BJ (cell line): ENCODE measurements at regions of chr1 and their contacts with region 1.

Region 1: GRCh38 chr1:226626577-226626956 is 78.0 kb downstream of the STUM start:
- DNase-seq: no peak
- H3K4me3 ChIP-seq: no peak overlapping the region
- H3K27me3 ChIP-seq: peaks cover 1% of the 10 kb centered on the region; the same call in 1 of the 2 replicates
- CTCF ChIP-seq: peak; percentile 97

Region 2: GRCh38 chr1:226603022-226603857 is 23.3 kb before region 1 on chr1:
- CTCF ChIA-PET with region 1: interaction called, 24 read pairs
- POLR2A ChIA-PET with region 1: no interaction called
- DNase-seq: peak; percentile 40
- H3K4me3 ChIP-seq: no peak overlapping the region
- H3K27me3 ChIP-seq: peaks cover 1% of the 10 kb centered on the region; the same call in 1 of the 2 replicates
- CTCF ChIP-seq: no peak

Region 3: DNA sequence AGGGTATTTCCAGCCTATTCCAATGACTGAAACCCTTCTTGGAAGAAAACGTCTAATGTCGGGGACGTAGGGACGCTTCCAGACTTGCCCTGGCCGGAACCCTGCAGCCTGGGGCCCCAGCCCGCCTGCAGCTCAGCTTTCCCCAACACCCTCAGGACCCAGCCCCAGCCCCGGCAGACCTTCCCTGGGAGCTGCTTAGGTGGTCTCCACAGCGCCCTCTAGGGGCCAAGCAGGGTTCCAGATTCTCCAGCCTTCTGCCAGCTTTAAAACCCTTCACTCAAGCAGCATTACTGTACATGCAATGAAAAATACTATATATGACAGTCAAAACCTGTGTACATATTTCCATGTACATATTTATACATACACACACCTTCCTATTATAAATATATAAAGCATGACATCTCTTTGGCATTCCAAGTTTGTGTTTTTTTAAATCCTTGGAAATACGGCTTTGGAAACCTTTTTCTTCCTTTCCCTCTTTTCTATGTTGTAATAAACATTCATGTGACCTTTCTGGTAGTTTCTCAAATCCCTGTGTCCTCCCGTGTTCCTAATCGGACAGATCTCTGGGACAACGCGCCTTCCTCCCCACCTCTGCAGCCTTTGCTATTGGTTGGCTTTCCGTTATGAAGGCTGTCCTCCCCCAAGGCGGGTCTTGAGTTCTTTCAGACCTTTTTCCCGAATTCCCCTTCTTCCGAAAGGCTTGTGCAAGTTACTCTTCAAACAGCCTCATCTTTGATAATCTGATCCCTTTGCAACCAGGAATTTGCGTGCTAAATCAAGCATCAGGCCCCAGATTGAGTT is 17.7 kb before region 1 on chr1:
- CTCF ChIA-PET with region 1: interaction called, 24 read pairs
- POLR2A ChIA-PET with region 1: no interaction called
- DNase-seq: no peak
- H3K4me3 ChIP-seq: no peak overlapping the region
- H3K27me3 ChIP-seq: peaks cover 2% of the 10 kb centered on the region; the same call in 1 of the 2 replicates
- CTCF ChIP-seq: peak; percentile 88

Region 4: GRCh38 chr1:226642876-226643576 is 16.5 kb after region 1 on chr1:
- CTCF ChIA-PET with region 1: interaction called, 10 read pairs
- POLR2A ChIA-PET with region 1: interaction called, 4 read pairs
- DNase-seq: no peak
- H3K4me3 ChIP-seq: no peak overlapping the region
- H3K27me3 ChIP-seq: no peaks in the 10 kb centered on the region
- CTCF ChIP-seq: no peak